Dendritic cell treated with granulocyte-macrophage colony-stimulating factor and Interleukin-4, amounts not matched to agents 40 ng/mL and 50 ng/mL, for 4 days (primary cell): ENCODE measurements at regions of chr15 and their contacts with region 1.

Region 1: GRCh38 chr15:58070801-58071418 is 5.4 kb upstream of the ALDH1A2 start:
- H3K4me3 Mint-ChIP-seq: no peak overlapping the region
- H3K27ac Mint-ChIP-seq: no peak overlapping the region
- H3K4me1 Mint-ChIP-seq: peaks cover 21% of the 10 kb centered on the region
- H3K27me3 Mint-ChIP-seq: peaks cover 40% of the 10 kb centered on the region

Region 2: GRCh38 chr15:57654153-57654852 is 416.6 kb before region 1 on chr15:
- intact Hi-C with region 1: no loop called
- H3K4me3 Mint-ChIP-seq: no peak overlapping the region
- H3K27ac Mint-ChIP-seq: no peak overlapping the region
- H3K4me1 Mint-ChIP-seq: no peaks in the 10 kb centered on the region
- H3K27me3 Mint-ChIP-seq: peaks cover 2% of the 10 kb centered on the region

Region 3: DNA sequence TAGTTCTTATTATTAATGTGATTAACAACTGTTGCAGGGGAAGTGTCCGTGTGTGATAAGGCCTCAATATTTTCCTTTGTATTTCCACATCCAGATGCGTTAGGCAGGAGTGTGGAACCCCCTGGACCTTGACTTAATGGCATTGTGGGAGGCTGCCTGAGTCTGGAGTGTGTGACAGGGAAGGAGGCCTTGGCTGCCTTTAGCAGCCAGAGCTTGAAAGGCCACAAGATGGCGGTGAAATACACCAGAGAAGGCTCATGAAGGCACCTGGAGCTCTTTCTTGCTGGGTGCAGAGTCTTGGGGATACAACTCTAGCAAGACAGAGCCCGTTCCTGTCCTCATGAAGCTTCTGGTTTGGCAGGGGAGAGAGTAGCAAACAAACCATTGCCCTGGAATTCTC is 327.5 kb before region 1 on chr15:
- intact Hi-C with region 1: loop called (anchors 10 kb)
- H3K4me3 Mint-ChIP-seq: no peak overlapping the region
- H3K27ac Mint-ChIP-seq: no peak overlapping the region
- H3K4me1 Mint-ChIP-seq: peaks cover 8% of the 10 kb centered on the region
- H3K27me3 Mint-ChIP-seq: no peaks in the 10 kb centered on the region

Region 4: DNA sequence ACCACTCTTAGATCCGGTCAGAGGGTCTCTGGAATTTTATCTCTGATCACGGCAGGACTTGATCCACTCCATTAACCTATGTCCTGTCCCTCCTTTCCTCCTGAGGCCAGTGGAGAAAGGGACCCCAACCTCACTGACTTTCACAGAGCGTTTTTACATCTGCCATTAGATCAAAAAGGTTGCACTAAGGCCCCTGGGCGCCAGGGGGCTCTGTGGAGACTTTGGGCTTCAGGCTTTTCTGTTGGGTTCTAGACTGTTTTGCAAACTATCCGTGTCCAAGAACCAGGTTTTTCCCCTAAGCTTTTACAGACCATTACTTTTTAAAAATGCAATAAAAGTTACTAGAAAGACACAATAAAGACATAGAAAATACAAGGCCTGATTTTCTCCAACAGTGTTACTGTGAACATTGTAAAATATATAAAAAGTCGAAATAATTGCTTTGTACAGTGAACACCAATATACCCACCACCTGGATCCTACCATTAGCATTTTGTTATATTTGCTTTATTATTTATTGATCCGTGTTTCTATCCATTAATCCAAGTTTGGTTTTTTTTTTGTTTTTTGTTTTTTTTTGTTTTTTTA is 204.7 kb before region 1 on chr15:
- intact Hi-C with region 1: loop called (anchors 2 kb)
- H3K4me3 Mint-ChIP-seq: no peak overlapping the region
- H3K27ac Mint-ChIP-seq: no peak overlapping the region
- H3K4me1 Mint-ChIP-seq: no peaks in the 10 kb centered on the region
- H3K27me3 Mint-ChIP-seq: peaks cover 40% of the 10 kb centered on the region

Region 5: GRCh38 chr15:58212909-58213526 is 142.1 kb after region 1 on chr15:
- intact Hi-C with region 1: no loop called
- H3K4me3 Mint-ChIP-seq: no peak overlapping the region
- H3K27ac Mint-ChIP-seq: no peak overlapping the region
- H3K4me1 Mint-ChIP-seq: peaks cover 27% of the 10 kb centered on the region
- H3K27me3 Mint-ChIP-seq: peaks cover 2% of the 10 kb centered on the region